ENCODE measurements at regions of chr19 and their contacts with region 1.

Region 1: DNA sequence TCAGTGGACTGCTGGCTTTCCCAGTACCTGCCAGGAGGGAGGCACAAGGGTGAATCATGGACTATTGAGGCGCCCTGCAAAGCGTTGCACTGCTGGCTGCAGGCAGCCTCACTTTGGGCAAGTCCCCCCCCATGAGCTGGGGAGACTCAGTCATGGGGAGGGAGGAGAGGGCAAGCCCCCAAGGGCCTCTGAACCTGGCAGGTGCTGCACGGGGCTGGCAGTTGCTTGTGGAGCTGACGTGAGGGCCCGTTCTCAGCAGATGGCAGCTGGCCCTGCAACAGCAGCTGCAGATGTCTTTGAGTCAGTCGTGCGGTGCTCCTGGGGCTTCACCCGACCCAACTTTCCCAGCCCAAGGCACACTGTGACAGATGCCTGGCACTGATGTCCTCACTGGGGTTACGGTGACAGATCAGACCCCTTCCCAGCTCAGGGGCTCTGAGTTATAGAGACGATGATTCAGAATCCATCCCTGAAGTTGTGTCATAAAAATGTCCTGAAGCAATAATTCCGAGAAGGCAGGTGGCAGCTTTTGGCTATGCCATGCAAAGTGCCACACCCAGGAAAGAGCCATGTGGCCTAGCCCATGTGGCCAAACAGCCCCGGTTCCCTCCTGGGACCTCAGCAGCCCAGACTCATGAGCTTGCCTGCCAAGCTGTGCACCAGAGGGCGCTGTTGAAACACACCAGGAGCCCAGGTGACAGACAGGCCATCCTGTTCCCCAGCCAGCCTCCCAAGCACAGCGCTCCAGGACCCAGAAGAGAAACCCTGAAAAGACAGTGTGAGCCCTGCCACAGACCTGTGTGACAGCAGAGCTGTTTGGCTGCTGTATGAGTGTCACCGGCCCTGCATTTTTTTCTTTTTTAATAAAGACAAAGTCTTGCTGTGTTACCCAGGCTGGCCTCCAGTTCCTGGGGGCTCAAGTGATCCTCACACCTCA is 53.6 kb upstream of the LDLR start:
- DNase-seq: peak; percentile 44
- H3K4me3 ChIP-seq: no peak overlapping the region
- H3K27ac ChIP-seq: peak overlapping the region; percentile 48 to 78 (median 74)
- H3K4me1 ChIP-seq: peaks cover 3 to 18% (median 15%) of the 10 kb centered on the region in 3 donors
- H3K27me3 ChIP-seq: no peaks in the 10 kb centered on the region
- CTCF ChIP-seq: peak; percentile 79 to 97 (median 92)
- POLR2A ChIP-seq: no peak

Region 2: DNA sequence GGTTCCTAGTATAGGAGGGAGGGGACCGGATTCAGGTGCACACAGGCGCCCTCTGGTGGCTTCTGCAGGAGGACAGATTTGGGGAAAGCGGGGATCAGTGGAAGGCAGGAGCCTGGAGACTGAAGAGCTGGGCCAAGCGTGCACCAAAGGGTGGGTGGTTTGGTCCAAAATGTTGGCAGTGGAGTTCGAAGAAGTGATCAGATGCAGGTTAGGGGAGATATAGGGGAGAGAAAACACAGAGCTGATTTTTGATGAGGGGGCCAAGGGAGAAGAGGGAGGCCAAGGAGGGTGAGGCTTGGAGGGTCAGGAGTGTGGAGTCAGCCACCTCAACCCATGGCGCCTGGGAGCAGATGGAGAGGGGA is 171.2 kb before region 1 on chr19:
- intact Hi-C with region 1: no loop called
- DNase-seq: no peak
- H3K4me3 ChIP-seq: peak overlapping the region in 2 of 4 donors; percentile 10 to 33
- H3K27ac ChIP-seq: peak overlapping the region in 3 of 4 donors; percentile 20 to 73 (median 33)
- H3K4me1 ChIP-seq: peaks cover 0 to 20% (median 8%) of the 10 kb centered on the region in 3 donors
- H3K27me3 ChIP-seq: no peaks in the 10 kb centered on the region
- CTCF ChIP-seq: peak; percentile 78 to 90 (median 86)
- POLR2A ChIP-seq: no peak

Region 3: DNA sequence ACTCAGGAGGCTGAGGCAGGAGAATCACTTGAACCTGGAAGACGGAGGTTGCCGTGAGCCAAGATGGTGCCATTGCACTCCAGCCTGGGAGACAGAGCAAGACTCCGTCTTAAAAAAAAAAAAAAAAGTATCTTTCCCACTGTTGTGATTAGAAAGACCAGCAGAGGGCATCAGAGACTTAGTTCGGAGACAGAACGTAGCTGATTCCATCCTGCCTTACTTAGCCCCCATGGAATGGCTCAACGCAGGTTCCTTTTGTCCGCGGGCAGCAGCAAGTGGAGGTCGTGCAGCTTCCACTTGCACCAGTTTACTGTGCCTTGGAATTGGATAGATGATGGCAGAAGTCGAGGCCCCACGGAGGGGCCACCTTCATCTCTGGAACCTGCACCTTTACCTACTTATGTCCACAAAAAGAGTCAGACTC is 99.0 kb before region 1 on chr19:
- intact Hi-C with region 1: loop called (anchors 10 kb)
- DNase-seq: no peak
- H3K4me3 ChIP-seq: peak overlapping the region in 1 of 4 donors; percentile 29
- H3K27ac ChIP-seq: peak overlapping the region in 1 of 4 donors; percentile 29
- H3K4me1 ChIP-seq: peaks cover 0 to 50% (median 9%) of the 10 kb centered on the region in 3 donors
- H3K27me3 ChIP-seq: no peaks in the 10 kb centered on the region
- CTCF ChIP-seq: peak in 5 of 6 experiments; percentile 62 to 72 (median 70)
- POLR2A ChIP-seq: no peak

Region 4: DNA sequence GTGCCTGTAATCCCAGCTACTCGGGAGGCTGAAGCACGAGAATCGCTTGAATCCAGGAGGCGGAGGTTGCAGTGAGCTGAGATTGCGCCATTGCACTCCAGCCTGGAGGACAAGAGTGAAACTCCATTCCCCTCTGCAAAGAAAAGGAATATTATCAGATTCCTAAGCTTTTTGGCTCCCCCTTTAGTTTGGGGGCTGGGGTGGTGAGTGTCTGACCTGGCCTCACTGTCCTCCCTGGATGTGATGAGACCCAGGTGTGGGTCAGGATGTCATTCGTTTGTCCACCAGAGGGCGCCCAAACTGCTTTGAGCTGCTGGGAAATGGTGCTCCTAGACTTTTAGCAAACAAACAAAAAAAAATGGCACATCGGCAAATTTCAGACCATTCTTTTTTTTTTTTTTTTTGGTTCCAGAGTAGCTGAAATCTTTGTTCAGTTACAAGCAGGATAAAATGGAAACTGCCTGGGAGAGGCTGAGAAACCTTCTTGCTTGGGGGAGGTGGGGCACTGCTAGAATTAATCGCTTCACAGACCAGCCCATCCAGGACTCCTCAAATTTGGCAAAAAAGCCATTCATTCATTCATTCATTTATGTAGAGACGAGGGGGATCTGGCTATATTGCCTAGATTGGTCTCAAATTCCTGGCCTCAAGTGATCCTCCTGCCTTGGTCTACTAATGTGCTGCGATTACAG is 90.4 kb after region 1 on chr19:
- intact Hi-C with region 1: loop called (anchors 5 kb)
- DNase-seq: no peak
- H3K4me3 ChIP-seq: no peak overlapping the region
- H3K27ac ChIP-seq: peak overlapping the region in 3 of 4 donors; percentile 5 to 54 (median 34)
- H3K4me1 ChIP-seq: peaks cover 0 to 21% (median 7%) of the 10 kb centered on the region in 3 donors
- H3K27me3 ChIP-seq: no peaks in the 10 kb centered on the region
- CTCF ChIP-seq: peak; percentile 40 to 85 (median 68)
- POLR2A ChIP-seq: no peak

Region 5: GRCh38 chr19:11203194-11204075 is 167.7 kb after region 1 on chr19:
- intact Hi-C with region 1: loop called (anchors 10 kb)
- DNase-seq: no peak
- H3K4me3 ChIP-seq: peak overlapping the region in 2 of 4 donors; percentile 5 to 15
- H3K27ac ChIP-seq: peak overlapping the region; percentile 67 to 93 (median 88)
- H3K4me1 ChIP-seq: peaks cover 0 to 40% (median 12%) of the 10 kb centered on the region in 3 donors
- H3K27me3 ChIP-seq: no peaks in the 10 kb centered on the region
- CTCF ChIP-seq: peak; percentile 60 to 85 (median 68)
- POLR2A ChIP-seq: no peak